ENCODE measurements at regions of chr11 and their contacts with region 1.

Region 1: GRCh38 chr11:117426269-117426685 is 98.6 kb downstream of the CEP164 start:
- DNase-seq: peak; percentile 96
- ATAC-seq: peak; percentile 79
- H3K4me3 Mint-ChIP-seq: peak overlapping the region; percentile 16; the same call in 1 of the 2 replicates
- H3K27ac Mint-ChIP-seq: no peak overlapping the region
- H3K4me1 Mint-ChIP-seq: peaks cover 20% of the 10 kb centered on the region
- H3K27me3 Mint-ChIP-seq: peaks cover 3% of the 10 kb centered on the region; the same call in 1 of the 2 replicates
- CTCF ChIP-seq: peak; percentile 95

Region 2: DNA sequence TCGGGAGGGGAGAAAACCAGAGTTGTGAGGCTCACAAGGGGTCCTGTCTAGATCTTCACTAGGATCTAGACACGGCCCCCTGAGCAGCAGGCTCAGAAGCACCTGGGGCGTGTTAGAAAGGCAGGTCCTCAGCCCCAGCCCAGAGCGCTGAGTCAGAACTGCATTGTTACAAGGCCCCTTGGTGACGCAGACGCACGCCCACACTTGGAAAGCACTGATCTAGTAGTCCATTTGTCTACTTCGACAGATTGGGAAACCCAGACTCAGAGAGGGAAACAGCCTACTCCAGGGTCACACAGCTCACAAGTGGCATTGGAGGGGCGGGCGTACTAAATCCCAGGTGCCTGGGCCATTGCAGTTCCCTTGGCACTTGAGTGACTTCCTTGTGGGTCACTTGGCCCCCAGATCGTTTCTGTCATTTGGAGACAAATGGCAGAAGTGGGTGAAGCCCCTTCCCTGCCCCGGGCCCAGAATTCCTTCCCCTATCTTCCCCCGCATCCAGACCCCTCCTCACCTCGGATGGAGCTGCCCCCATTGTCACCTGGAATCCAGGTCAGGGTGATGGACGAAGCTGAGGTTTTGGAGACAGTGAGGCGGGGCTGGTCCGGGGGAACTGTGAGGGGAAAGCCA is 12.2 kb after region 1 on chr11:
- CTCF ChIA-PET with region 1: interaction called, 84 read pairs
- POLR2A ChIA-PET with region 1: no interaction called
- DNase-seq: no peak
- ATAC-seq: no peak
- H3K4me3 Mint-ChIP-seq: no peak overlapping the region
- H3K27ac Mint-ChIP-seq: no peak overlapping the region
- H3K4me1 Mint-ChIP-seq: peaks cover 5% of the 10 kb centered on the region; the same call in 1 of the 2 replicates
- H3K27me3 Mint-ChIP-seq: no peaks in the 10 kb centered on the region
- CTCF ChIP-seq: no peak

Region 3: DNA sequence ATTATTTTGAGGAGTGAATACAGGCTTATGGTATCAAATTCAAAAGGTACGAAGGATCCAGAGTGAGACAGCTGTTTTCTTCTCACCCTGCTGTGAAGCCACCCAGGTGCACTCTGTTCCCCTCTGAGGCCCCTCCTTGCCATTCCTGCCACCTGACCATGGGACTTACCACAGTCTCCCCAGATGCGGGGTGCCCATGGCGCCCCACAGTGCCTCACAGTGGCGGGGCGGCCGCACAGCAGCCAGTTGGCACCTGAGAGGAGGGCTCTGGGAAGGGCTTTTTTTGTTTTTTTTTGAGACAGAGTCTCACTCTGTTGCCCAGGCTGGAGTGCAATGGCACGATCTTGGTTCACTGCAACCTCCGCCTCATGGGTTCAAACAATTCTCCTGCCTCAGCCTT is 53.1 kb after region 1 on chr11:
- CTCF ChIA-PET with region 1: interaction called, 39 read pairs
- POLR2A ChIA-PET with region 1: no interaction called
- DNase-seq: peak; percentile 63
- ATAC-seq: peak; percentile 83
- H3K4me3 Mint-ChIP-seq: no peak overlapping the region
- H3K27ac Mint-ChIP-seq: no peak overlapping the region
- H3K4me1 Mint-ChIP-seq: peaks cover 28% of the 10 kb centered on the region
- H3K27me3 Mint-ChIP-seq: peaks cover 2% of the 10 kb centered on the region
- CTCF ChIP-seq: no peak

Region 4: GRCh38 chr11:117538263-117539135 is 112.2 kb after region 1 on chr11:
- CTCF ChIA-PET with region 1: interaction called, 22 read pairs
- POLR2A ChIA-PET with region 1: no interaction called
- DNase-seq: no peak
- ATAC-seq: peak; percentile 38
- H3K4me3 Mint-ChIP-seq: no peak overlapping the region
- H3K27ac Mint-ChIP-seq: no peak overlapping the region
- H3K4me1 Mint-ChIP-seq: peaks cover 12% of the 10 kb centered on the region
- H3K27me3 Mint-ChIP-seq: no peaks in the 10 kb centered on the region; the same call in 1 of the 2 replicates
- CTCF ChIP-seq: no peak

Region 5: GRCh38 chr11:117621226-117621625 is 194.9 kb after region 1 on chr11:
- CTCF ChIA-PET with region 1: interaction called, 175 read pairs
- POLR2A ChIA-PET with region 1: no interaction called
- DNase-seq: no peak
- ATAC-seq: no peak
- H3K4me3 Mint-ChIP-seq: no peak overlapping the region
- H3K27ac Mint-ChIP-seq: no peak overlapping the region
- H3K4me1 Mint-ChIP-seq: peaks cover 15% of the 10 kb centered on the region
- H3K27me3 Mint-ChIP-seq: no peaks in the 10 kb centered on the region
- CTCF ChIP-seq: peak; percentile 35

Region 6: DNA sequence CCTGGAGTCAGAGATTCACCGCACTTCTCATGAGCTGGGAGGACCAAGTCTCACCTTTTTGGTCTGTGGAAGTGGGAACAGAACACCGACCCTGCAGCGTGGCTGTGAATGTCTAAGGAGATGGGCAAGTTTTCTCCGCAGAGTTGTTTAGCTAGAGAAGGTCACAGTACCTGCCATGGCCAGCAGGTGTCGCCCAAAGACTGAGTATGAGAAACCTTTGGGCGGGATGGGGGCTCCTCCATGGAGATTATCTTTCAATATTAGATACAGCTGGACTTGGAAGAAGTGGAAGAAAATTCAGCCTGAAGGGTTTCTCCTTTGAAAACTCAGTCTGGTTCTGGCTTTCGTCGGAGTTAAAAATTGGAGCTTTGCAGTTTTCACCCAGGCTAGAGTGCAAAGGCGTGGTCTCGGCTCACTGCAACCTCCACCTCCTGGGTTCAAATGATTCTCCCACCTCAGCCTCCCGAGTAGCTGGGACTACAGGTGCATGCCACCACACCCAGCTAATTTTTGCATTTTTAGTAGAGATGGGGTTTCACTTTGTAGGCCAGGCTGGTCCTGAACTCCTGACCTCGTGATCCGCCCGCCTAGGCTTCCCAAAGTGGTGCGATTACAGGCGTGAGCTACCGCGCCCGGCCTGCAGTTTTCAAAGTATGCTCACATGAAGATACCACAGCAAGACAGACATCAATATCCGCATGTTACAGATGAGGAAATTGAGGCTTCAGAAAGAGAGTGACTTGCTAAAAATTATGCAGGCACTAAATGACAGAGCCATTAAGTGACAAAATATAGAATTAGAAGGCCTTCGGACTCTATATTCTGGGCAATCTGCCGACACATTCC is 381.4 kb after region 1 on chr11:
- CTCF ChIA-PET with region 1: interaction called, 122 read pairs
- POLR2A ChIA-PET with region 1: no interaction called
- DNase-seq: peak; percentile 85
- ATAC-seq: peak; percentile 69
- H3K4me3 Mint-ChIP-seq: no peak overlapping the region
- H3K27ac Mint-ChIP-seq: no peak overlapping the region
- H3K4me1 Mint-ChIP-seq: no peaks in the 10 kb centered on the region
- H3K27me3 Mint-ChIP-seq: peaks cover 8% of the 10 kb centered on the region
- CTCF ChIP-seq: peak; percentile 85

Measured in WTC11 (cell line).